WTC11 (cell line): ENCODE measurements at regions of chr3 and their contacts with region 1.

Region 1: DNA sequence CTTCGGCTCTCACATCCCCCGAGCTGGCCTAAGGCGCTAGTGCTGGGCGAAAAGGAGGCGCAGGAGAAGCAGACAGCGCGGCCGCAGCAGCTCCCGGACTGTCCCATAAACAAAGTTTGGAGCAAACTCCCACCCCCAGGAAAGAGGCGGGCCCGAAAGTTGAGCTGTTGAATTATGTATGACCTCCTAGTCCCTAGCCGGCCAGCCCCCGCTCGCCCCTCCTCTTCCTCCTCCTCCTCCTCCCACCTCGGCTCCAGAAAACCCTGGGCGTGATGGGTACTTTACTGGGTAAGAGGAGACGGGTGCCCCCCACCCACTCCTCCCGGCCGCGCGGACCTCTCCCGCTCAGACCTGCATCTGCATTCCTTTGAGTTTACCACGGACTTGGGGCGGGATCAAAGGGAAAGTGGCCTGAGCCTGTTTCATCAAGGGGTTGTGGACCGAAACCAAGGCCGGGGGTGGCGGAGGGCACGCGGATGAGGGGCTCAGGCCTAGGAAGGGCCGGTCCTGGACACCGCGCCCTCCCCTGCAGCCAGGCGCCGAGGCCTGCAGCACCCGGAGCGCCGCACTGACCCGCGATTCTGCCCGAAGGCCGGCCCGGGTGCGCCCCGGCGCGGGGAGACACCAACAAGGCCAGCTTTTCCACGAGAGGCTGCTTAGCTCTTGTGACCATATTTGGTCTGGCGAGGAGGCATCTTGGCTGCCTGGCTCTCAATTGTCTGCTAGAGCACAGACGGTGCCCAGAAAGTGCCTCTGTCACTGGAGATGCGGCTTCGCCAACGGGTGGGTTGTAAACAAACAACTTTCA is at the start of gene WWTR1:
- DNase-seq: peak; percentile 96
- ATAC-seq: peak; percentile 81
- H3K4me3 Mint-ChIP-seq: peak within 1 kb of the TSS; percentile 90
- H3K27ac Mint-ChIP-seq: peak within 1 kb of the TSS; percentile 99
- H3K4me1 Mint-ChIP-seq: peaks cover 70% of the 10 kb centered on the region
- H3K27me3 Mint-ChIP-seq: no peaks in the 10 kb centered on the region; the same call in 1 of the 2 replicates
- CTCF ChIP-seq: no peak
- total RNA-seq, gene WWTR1: 24.6 to 30.0 TPM (median 25.5 TPM) in 3 replicates

Region 2: DNA sequence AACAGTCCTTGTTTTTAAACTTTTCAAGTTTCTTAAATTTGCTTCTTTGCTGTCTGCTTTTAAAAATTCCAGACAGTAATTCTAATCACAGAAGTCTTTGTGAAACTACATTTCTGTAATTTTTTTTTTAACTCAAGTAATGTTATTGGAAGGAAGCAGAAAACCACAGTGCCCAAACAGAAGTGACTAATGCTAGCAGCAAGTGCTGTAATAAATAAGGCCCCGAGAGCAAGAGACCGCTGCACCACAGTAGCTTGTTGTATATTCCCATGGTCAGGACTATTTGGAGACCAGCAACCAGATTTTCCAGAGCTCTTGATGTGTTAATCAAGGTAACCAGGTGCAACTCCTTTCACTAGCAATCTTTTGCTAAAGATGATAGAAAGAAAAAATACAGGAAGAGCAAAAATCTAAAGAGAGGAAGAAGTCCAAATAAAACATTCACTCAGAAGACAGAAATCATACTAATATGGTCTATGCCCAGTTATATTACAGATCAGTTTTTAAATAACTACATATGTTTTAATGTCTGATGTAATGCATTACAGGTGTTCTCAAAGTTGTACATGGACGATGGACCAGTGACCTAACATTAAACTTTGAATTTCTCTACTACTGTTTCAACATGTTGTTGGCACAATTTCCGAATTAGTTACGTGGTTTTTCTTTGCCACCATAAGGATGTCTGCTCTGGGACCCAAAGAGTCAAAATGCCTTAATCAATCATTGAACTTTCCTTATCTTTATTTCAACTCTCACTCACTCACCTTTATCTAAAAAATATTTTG is 36.7 kb before region 1 on chr3:
- CTCF ChIA-PET with region 1: no interaction called
- POLR2A ChIA-PET with region 1: interaction called, 10 read pairs
- DNase-seq: no peak
- ATAC-seq: no peak
- H3K4me3 Mint-ChIP-seq: no peak overlapping the region
- H3K27ac Mint-ChIP-seq: peak overlapping the region; percentile 85; the same call in 1 of the 2 replicates
- H3K4me1 Mint-ChIP-seq: peaks cover 60% of the 10 kb centered on the region
- H3K27me3 Mint-ChIP-seq: no peaks in the 10 kb centered on the region
- CTCF ChIP-seq: no peak

Region 3: DNA sequence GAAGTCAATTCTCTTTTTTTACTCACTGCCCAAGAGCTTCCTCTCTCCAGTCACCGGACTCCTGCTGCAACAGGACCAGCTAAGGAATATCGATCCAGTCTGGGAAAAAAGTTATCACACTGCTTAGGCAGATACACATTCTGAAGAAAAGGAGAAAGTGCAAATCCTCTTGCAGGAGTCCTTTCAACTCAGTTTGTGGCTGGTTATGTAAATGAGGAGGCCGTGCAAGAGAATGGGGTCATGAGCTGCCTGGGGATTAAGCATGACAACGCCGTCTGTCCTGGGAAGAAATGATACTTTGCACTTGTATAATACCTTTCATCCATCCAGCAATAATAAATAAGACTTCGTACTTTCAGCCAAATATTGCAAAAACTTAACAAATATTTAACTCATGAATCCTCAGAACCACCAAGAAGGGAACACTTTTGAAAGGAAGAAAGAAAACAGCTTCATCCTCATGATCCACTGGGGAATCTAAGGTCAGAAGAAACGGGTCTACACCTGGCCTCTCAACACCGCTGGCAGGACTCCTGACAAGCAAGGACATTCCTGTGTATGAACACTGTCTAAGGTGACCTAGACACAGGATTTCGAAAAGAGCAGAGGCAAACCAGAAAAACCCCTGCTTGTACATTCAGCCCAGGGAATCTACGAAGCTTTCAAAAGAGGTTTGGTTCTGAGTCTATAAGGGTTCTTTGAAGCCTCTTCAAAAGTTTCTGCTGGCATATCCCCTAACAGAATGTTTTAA is 12.8 kb after region 1 on chr3:
- CTCF ChIA-PET with region 1: interaction called, 13 read pairs
- POLR2A ChIA-PET with region 1: interaction called, 33 read pairs
- DNase-seq: no peak
- ATAC-seq: peak; percentile 93
- H3K4me3 Mint-ChIP-seq: peak overlapping the region; percentile 64
- H3K27ac Mint-ChIP-seq: peak overlapping the region; percentile 70
- H3K4me1 Mint-ChIP-seq: peaks cover 35% of the 10 kb centered on the region
- H3K27me3 Mint-ChIP-seq: peaks cover 27% of the 10 kb centered on the region
- CTCF ChIP-seq: no peak